CD8-positive, alpha-beta memory T cell (primary cell): ENCODE measurements at regions of chr7 and their contacts with region 1.

Region 1: DNA sequence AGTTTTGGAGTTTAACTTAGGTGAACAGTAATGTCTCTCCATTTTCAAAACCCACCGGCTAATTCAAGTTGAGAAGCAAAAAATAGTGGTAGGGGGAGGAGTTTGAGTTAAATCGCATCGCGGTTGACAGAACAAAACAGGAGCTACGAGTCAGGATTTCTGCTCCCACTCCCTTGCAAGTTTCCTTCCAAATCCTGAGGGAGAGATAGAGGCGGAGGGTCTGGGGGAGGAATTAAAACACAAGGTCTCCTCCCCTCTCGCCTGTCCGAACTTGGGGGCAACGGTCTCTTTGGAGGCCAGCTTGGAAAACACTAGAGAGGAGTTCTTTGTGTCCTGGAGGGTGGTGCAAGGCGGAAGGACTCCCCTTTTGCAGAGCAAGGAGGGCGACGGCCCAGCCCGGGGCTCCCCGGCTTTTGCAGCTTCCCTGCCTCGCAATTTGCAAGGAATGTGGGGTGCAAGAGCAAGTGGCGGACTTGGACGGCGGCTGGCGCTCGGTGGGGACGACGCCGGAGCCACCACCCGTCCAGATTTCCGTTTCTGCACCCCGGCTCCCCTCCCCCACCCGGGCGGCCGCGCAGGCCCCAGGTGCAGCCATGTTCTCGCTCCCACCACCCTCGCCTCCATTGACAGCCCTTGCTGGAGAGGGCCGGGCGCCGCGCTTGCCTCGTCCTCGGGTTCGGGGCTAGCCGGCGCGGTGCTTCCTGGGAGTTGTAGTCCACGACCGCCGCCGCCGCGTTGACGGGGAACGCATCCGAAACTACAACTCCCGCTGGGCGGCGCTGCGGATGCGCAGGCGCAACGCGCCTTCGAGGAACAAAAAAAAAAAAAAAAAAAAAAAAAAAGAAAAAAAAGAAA is 454 bp upstream of the GTF2I start:
- DNase-seq: peak; percentile 96 to 98 (median 96)
- H3K4me3 ChIP-seq: peak overlapping the region; percentile 86
- H3K4me3 Mint-ChIP-seq: peak overlapping the region; percentile 88 to 99 (median 92)
- H3K27ac ChIP-seq: peak overlapping the region; percentile 85
- H3K27ac Mint-ChIP-seq: peak overlapping the region; percentile 72 to 98 (median 90)
- H3K4me1 ChIP-seq: peaks cover 40% of the 10 kb centered on the region
- H3K4me1 Mint-ChIP-seq: peaks cover 34 to 51% (median 50%) of the 10 kb centered on the region in 3 donors
- H3K27me3 ChIP-seq: no peaks in the 10 kb centered on the region
- H3K27me3 Mint-ChIP-seq: peaks cover 0 to 2% of the 10 kb centered on the region in 2 donors

Region 2: GRCh38 chr7:74173866-74174605 is 483.0 kb before region 1 on chr7 and contains the start of gene EIF4H:
- CTCF ChIA-PET with region 1: no interaction called
- POLR2A ChIA-PET with region 1: interaction called, 11 read pairs
- DNase-seq: peak; percentile 93 to 96 (median 95)
- H3K4me3 ChIP-seq: peak within 1 kb of the TSS; percentile 86
- H3K4me3 Mint-ChIP-seq: peak within 1 kb of the TSS; percentile 85 to 95 (median 91)
- H3K27ac ChIP-seq: peak within 1 kb of the TSS; percentile 88
- H3K27ac Mint-ChIP-seq: peak within 1 kb of the TSS; percentile 95 to 98 (median 96)
- H3K4me1 ChIP-seq: peaks cover 49% of the 10 kb centered on the region
- H3K4me1 Mint-ChIP-seq: peaks cover 37 to 56% (median 54%) of the 10 kb centered on the region in 3 donors
- H3K27me3 ChIP-seq: no peaks in the 10 kb centered on the region
- H3K27me3 Mint-ChIP-seq: no peaks in the 10 kb centered on the region
- total RNA-seq, gene EIF4H: 346 to 349 TPM